Heart right ventricle (tissue), 16 donors: ENCODE measurements at regions of chr1 and their contacts with region 1.

Region 1: DNA sequence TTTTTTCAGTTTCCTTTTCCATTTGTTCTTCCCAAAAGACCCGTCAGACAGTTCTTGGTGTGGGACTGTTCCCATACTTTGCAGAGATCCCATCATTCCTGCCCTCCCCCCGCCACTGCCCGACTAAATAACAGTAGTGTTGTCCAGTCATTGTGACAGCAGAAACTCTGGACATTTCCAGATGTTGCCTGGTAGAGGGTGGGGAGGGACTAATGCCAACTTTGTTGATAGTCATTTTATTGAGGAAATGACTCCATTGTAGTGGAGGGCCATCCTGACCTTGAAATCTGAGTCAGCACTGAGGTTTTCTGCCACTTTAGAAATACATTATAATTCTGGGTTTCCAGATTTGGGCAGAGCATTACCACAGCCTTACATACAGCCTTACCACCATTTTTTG is 85.4 kb downstream of the CEP350 start:
- DNase-seq: no peak
- ATAC-seq: no peak
- H3K4me3 ChIP-seq: no peak overlapping the region
- H3K27ac ChIP-seq: no peak overlapping the region
- H3K4me1 ChIP-seq: no peaks in the 10 kb centered on the region
- H3K27me3 ChIP-seq: no peaks in the 10 kb centered on the region
- CTCF ChIP-seq: no peak

Region 2: DNA sequence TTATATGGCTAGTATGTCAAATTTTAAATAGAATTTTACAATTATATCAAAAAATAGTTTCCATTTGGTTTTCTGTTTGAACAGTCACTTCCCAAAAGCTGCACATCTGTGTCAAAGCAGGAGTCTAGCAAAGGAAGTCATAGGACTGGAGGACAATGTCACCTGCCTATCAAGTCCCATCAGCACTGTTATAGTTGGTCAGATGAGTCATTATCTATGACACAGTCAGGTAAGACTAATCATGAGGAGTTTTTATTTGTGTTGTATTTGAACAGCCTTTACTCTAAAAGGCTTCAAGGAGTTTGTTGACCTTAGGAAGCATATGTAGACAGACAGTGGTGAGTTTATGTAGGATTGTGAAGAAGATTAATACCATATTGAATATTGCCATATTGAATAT is 40.4 kb after region 1 on chr1:
- intact Hi-C with region 1: loop called in 2 of 10 experiments (anchors 5 kb)
- DNase-seq: no peak
- ATAC-seq: no peak
- H3K4me3 ChIP-seq: no peak overlapping the region
- H3K27ac ChIP-seq: no peak overlapping the region
- H3K4me1 ChIP-seq: no peaks in the 10 kb centered on the region
- H3K27me3 ChIP-seq: no peaks in the 10 kb centered on the region
- CTCF ChIP-seq: no peak